HEK293T (cell line): ENCODE measurements at regions of chr2 and their contacts with region 1.

Region 1: DNA sequence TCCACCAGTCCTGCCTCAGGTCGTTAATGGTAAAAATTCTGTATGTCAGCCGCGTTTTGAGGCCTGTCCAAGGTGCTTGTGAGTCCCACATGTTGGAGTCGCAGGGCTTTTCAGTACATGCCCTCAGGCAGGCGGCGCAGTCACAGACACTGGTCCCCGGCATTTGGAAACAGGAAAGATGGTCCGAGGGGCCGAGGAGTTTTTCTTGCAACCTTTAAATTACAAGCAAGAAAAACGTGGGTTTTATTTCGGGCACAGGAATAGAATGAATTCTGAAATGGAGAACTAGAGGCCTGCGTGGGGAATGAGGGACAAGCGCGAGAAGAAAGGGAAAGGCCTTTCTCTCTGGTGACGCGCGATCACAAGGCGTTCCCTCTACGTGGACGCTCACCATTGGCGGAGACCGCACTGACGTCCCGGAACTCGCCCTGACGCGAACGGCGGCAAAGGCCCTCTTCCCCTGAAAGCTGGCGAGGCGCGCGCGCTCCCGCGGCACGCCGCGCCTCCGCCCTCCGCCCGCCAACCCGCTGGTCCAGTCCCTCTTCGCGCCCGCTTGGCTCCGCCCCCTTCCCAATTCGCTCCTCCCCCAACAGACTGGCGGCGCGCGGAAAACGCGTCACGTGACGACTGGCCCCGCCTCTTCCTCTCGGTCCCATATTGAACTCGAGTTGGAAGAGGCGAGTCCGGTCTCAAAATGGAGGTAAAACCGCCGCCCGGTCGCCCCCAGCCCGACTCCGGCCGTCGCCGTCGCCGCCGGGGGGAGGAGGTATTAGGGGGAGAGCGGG is at the start of gene HNRNPA3:
- DNase-seq: peak; percentile 98

Region 2: DNA sequence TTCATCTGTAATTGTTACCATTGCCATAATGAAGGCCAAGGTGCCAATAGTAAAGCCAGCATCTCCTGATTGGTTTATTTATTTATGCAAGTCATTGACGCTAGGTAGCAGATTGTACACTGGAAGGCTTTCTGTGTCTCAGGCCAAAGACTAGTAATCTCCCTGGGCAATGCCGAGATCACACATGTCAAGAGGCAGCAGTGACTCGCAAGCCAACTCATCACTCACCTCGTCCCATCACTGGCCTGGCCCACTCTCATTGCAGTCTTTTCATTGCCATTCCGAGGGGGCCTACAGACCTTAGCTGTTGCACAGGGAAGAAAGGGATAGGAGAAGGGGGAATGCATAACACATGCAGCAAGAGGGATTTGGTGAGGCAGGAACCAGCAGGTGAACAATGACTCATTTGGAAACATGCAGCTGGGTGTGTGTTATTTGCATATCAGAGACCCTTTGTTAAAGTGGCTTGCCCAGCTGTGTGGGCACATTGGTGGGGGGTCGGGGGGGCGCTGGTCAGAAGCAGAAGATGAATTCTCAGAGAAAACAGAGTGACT is 448.4 kb before region 1 on chr2:
- CTCF ChIA-PET with region 1: no interaction called
- POLR2A ChIA-PET with region 1: no interaction called
- DNase-seq: no peak

Region 3: GRCh38 chr2:177138823-177139222 is 73.5 kb before region 1 on chr2:
- CTCF ChIA-PET with region 1: no interaction called
- POLR2A ChIA-PET with region 1: no interaction called
- DNase-seq: no peak

Region 4: GRCh38 chr2:177201919-177202346 is 10.4 kb before region 1 on chr2:
- CTCF ChIA-PET with region 1: no interaction called
- POLR2A ChIA-PET with region 1: interaction called, 19 read pairs
- DNase-seq: no peak